PC-3 (cell line): ENCODE measurements at regions of chr10 and their contacts with region 1.

Region 1: GRCh38 chr10:37789590-37789989 is 67.8 kb downstream of the ZNF248 start:
- DNase-seq: peak; percentile 100
- ATAC-seq: peak; percentile 95
- H3K4me3 ChIP-seq: peak overlapping the region; percentile 37; the same call in 1 of the 2 replicates
- H3K27ac ChIP-seq: peak overlapping the region; percentile 80
- H3K4me1 ChIP-seq: peaks cover 27% of the 10 kb centered on the region
- H3K27me3 ChIP-seq: no peaks in the 10 kb centered on the region
- CTCF ChIP-seq: no peak

Region 2: DNA sequence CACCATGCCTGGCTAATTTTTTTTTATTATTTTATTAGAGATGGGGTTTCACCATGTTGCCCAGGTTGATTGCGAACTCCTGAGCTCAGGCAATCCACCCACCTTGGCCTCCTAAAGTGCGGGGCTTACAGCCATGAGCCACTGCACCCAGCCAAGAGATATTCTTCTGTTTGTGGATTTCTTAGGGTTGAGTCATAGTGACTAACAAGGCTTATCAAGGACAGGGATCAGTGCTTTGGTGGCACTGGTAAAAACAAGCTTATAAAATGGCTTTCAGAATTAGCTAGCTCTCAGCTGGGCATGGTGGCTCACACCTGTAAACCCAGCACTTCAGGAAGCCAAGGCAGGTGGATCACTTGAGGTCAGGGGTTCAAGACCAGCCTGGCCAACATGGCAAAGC is 54.6 kb before region 1 on chr10:
- CTCF ChIA-PET with region 1: no interaction called
- POLR2A ChIA-PET with region 1: no interaction called
- intact Hi-C with region 1: loop called (anchors 2 kb)
- DNase-seq: peak; percentile 100
- ATAC-seq: peak; percentile 72
- H3K4me3 ChIP-seq: no peak overlapping the region
- H3K27ac ChIP-seq: peak overlapping the region; percentile 7; the same call in 1 of the 2 replicates
- H3K4me1 ChIP-seq: peaks cover 42% of the 10 kb centered on the region
- H3K27me3 ChIP-seq: no peaks in the 10 kb centered on the region
- CTCF ChIP-seq: no peak

Region 3: DNA sequence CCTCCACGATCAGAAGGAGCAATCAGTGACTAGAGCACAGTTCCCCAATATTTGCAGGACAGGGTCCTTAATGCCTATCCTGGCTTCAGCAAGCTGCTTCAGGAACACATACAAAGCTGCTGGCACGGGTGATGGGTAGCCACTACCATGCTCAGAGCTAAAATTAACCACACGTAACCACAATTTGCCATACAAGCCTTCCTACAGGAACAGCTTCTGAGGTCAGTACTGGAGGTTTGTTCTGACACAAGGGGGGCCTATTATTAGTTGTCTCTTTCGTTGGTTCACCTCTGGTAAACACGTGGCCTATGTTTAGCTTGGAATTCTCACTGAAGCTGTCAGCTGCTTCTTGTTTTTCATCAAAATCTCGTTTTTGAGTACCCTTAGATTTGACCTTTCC is 26.7 kb after region 1 on chr10:
- CTCF ChIA-PET with region 1: no interaction called
- POLR2A ChIA-PET with region 1: no interaction called
- intact Hi-C with region 1: loop called (anchors 2 kb)
- DNase-seq: no peak
- ATAC-seq: no peak
- H3K4me3 ChIP-seq: no peak overlapping the region
- H3K27ac ChIP-seq: no peak overlapping the region
- H3K4me1 ChIP-seq: no peaks in the 10 kb centered on the region
- H3K27me3 ChIP-seq: no peaks in the 10 kb centered on the region
- CTCF ChIP-seq: no peak

Region 4: GRCh38 chr10:37857287-37858211 is 68.0 kb after region 1 on chr10 and contains the start of gene ZNF248:
- CTCF ChIA-PET with region 1: no interaction called
- POLR2A ChIA-PET with region 1: interaction called, 18 read pairs
- intact Hi-C with region 1: loop called (anchors 1 kb)
- DNase-seq: peak; percentile 100
- ATAC-seq: peak; percentile 85
- H3K4me3 ChIP-seq: peak within 1 kb of the TSS; percentile 74
- H3K27ac ChIP-seq: peak within 1 kb of the TSS; percentile 85
- H3K4me1 ChIP-seq: peaks cover 49% of the 10 kb centered on the region
- H3K27me3 ChIP-seq: no peaks in the 10 kb centered on the region
- CTCF ChIP-seq: 0 out of 2 replicates have a peak, but pooled peaks have one; percentile 29
- total RNA-seq, gene ZNF248: 112 and 115 TPM in 2 replicates

Region 5: DNA sequence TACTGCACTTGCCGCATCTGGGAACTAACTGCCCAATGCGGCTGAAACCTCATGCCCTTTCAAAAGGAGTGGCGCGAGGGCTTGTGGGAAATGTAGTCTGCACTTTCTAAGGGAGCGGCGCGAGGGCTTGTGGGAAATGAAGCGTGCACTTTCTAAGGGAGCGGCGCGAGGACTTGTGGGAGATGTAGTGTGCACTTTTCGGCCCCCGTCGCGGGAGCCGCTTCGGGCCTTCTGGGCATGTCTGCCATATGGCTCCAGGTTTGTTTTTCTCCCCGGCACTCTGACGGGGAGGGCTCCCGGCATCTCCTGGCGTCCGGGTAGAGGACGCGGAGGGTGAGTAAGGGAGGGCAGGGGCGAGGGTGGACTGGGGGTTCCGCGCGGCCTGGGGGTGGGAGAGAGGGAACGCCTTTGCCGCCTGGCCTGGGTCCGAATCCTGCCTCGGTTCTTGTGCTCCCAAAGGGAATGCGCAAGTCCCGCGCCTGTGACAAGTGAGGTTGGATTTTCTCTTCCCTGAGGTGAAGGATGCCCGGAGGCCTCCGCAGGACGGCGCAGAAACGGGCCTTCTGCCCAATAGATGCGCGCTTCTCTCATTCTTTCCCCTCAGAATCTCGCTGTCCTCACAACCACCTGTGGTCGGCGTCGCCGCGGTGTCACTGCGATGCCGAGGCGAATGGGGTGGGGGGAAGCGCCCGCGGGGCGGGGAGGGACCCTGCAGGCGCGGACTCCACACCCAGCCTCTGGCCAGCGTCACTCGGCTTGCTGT is 304.7 kb after region 1 on chr10 and contains the start of gene ZNF37A:
- CTCF ChIA-PET with region 1: no interaction called
- POLR2A ChIA-PET with region 1: no interaction called
- intact Hi-C with region 1: no loop called
- DNase-seq: peak; percentile 98
- ATAC-seq: peak; percentile 98
- H3K4me3 ChIP-seq: peak within 1 kb of the TSS; percentile 91
- H3K27ac ChIP-seq: no peak within 1 kb of the TSS; the same call in 1 of the 2 replicates
- H3K4me1 ChIP-seq: peaks cover 13% of the 10 kb centered on the region
- H3K27me3 ChIP-seq: no peaks in the 10 kb centered on the region
- CTCF ChIP-seq: no peak
- total RNA-seq, gene ZNF37A: 19.7 and 25.7 TPM in 2 replicates

Region 6: DNA sequence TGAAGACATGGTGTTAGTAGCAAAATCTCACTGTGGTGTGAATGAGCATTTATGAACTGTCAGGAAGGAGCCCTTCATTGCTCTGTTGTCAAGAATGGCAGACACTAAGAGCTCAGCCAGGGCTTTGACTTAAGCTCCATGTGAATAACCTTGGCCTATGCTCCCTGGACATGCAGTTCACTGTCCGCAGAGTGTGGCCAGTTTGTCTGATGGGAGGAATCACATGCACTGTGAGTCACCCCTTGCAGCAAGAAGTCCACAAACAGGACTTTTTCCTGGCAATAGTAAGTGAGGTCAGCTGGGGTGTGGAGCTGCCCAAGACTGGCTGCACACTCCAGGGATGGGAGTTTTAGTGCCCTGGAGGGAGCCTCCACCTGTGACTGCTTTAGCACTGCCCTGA is 354.0 kb after region 1 on chr10:
- CTCF ChIA-PET with region 1: no interaction called
- POLR2A ChIA-PET with region 1: interaction called, 21 read pairs
- intact Hi-C with region 1: no loop called
- DNase-seq: no peak
- ATAC-seq: no peak
- H3K4me3 ChIP-seq: no peak overlapping the region
- H3K27ac ChIP-seq: no peak overlapping the region
- H3K4me1 ChIP-seq: no peaks in the 10 kb centered on the region
- H3K27me3 ChIP-seq: no peaks in the 10 kb centered on the region
- CTCF ChIP-seq: no peak